ENCODE measurements at regions of chr3 and their contacts with region 1.

Region 1: DNA sequence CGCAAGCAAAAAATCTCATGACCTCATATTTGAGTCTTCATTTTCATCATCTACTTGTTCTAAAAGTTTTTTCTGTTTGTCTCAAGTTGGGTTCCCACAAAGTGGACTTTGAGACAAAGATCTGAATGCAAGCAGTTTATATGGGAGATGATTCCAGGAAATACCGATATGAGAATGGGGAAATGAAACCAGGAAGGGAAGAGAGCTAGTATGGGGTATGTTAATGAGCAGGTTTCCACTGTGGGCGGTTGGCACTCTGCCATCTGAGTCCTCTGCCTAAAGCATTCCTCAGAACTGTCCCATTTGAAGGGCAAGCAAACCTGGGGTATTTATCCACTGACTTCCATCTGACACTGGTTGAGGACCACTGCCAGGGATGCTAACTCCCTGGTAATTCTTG is 8.8 kb downstream of the ADPRH start:
- DNase-seq: no peak
- H3K4me3 ChIP-seq: no peak overlapping the region
- H3K27me3 ChIP-seq: no peaks in the 10 kb centered on the region; the same call in 1 of the 2 replicates
- CTCF ChIP-seq: no peak

Region 2: GRCh38 chr3:119600732-119601131 is 12.6 kb after region 1 on chr3:
- CTCF ChIA-PET with region 1: interaction called, 16 read pairs
- POLR2A ChIA-PET with region 1: no interaction called
- DNase-seq: no peak
- H3K4me3 ChIP-seq: no peak overlapping the region
- H3K27me3 ChIP-seq: no peaks in the 10 kb centered on the region
- CTCF ChIP-seq: peak; percentile 47

Measured in BJ (cell line).